Stomach (tissue), 19 donors: ENCODE measurements at regions of chr10 and their contacts with region 1.

Region 1: DNA sequence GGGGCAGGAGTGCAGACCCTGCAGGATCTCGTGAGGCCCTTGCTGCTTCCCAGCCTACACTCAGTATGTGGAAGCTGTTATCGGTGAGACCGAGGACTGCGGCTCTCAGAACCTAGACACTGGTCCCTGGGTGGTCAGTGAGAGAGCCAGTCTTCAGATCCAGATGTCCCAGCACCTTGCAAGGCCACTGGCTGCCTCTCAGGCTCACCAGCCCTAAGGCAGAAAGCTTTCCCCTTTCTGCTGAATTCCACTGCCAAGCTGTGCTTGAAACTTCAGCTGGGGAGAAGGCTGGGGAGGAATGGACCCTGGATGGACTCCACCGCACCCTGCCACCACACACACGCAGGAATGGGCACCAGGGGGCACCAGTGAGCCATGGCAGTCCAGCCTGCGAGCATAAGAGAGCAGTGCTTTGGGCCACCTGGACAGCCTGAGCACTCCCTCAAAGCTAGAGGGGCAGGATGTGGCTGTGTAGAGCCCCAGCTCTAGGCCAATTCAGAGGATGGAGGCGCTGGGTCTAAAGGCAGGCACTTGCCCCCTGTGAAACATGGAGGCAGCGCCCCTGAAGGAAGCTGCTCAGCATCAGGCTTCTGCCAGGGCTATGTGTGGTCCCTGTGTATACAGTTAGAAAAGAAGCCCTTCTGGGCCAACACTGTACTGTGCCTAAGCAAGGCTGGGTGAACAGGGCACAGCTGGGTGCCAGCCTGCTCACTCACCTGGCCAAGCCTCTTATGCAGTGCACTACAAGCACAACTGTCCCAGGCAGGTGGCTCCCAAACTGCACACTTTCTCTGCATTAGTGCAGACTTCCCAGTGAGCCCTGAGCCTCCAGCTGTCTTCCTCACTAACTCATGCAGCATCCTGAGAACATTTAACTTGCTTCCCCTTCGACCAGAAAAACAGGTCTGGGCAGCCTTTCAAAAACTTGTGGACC is 21.6 kb downstream of the TMEM72 start:
- DNase-seq: peak; percentile 94 to 96
- H3K4me3 ChIP-seq: no peak overlapping the region
- H3K27ac ChIP-seq: no peak overlapping the region
- H3K4me1 ChIP-seq: peaks cover 11 to 29% (median 19%) of the 10 kb centered on the region in 4 donors
- H3K27me3 ChIP-seq: no peaks in the 10 kb centered on the region
- CTCF ChIP-seq: peak in 6 of 7 experiments; percentile 77 to 97 (median 96)
- EP300 ChIP-seq: no peak
- POLR2A ChIP-seq: no peak

Region 2: DNA sequence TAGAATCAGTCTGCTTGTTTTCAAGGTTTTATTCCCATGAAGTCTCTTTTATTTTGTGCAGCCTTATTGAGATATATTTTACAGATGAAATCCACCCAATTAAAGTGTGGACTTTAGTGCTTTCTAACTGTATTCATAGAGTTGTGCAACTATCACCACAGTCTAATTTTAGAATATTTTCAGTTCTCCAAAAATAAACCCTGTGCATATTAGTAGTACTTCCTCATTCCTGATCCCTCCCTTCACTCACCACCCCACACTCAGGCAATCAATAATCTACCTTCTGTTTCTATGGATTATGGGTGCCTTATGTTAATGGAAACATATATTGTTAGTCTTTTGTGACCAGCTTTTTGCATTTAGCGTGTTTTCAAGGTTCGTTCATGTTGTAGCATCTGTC is 207.4 kb before region 1 on chr10:
- intact Hi-C with region 1: no loop called
- DNase-seq: no peak
- H3K4me3 ChIP-seq: no peak overlapping the region
- H3K27ac ChIP-seq: no peak overlapping the region
- H3K4me1 ChIP-seq: peaks cover 0 to 3% (median 0%) of the 10 kb centered on the region in 4 donors
- H3K27me3 ChIP-seq: no peaks in the 10 kb centered on the region
- CTCF ChIP-seq: no peak
- EP300 ChIP-seq: no peak
- POLR2A ChIP-seq: no peak

Region 3: GRCh38 chr10:44965651-44966097 is 32.9 kb after region 1 on chr10:
- intact Hi-C with region 1: loop called (anchors 5 kb)
- DNase-seq: no peak
- H3K4me3 ChIP-seq: no peak overlapping the region
- H3K27ac ChIP-seq: peak overlapping the region in 4 of 5 donors; percentile 38 to 92 (median 48)
- H3K4me1 ChIP-seq: peaks cover 38 to 88% (median 68%) of the 10 kb centered on the region in 4 donors
- H3K27me3 ChIP-seq: no peaks in the 10 kb centered on the region
- CTCF ChIP-seq: no peak
- EP300 ChIP-seq: no peak
- POLR2A ChIP-seq: no peak